PC-3 (cell line): ENCODE measurements at regions of chr17 and their contacts with region 1.

Region 1: GRCh38 chr17:49952209-49952911 is 16.6 kb upstream of the DLX4 start:
- DNase-seq: peak; percentile 90
- ATAC-seq: peak; percentile 88
- H3K4me3 ChIP-seq: peak overlapping the region; percentile 3; the same call in 1 of the 2 replicates
- H3K27ac ChIP-seq: peak overlapping the region; percentile 8; the same call in 1 of the 2 replicates
- H3K4me1 ChIP-seq: peaks cover 28% of the 10 kb centered on the region
- H3K27me3 ChIP-seq: no peaks in the 10 kb centered on the region
- CTCF ChIP-seq: peak; percentile 100

Region 2: GRCh38 chr17:49899191-49899485 is 53.2 kb before region 1 on chr17:
- CTCF ChIA-PET with region 1: interaction called, 5 read pairs
- POLR2A ChIA-PET with region 1: no interaction called
- intact Hi-C with region 1: loop called (anchors 5 kb)
- DNase-seq: peak; percentile 49
- ATAC-seq: peak; percentile 57
- H3K4me3 ChIP-seq: no peak overlapping the region
- H3K27ac ChIP-seq: no peak overlapping the region
- H3K4me1 ChIP-seq: peaks cover 5% of the 10 kb centered on the region
- H3K27me3 ChIP-seq: peaks cover 16% of the 10 kb centered on the region
- CTCF ChIP-seq: peak; percentile 64

Region 3: GRCh38 chr17:50015146-50015545 is 62.8 kb after region 1 on chr17:
- CTCF ChIA-PET with region 1: no interaction called
- POLR2A ChIA-PET with region 1: no interaction called
- intact Hi-C with region 1: no loop called
- DNase-seq: no peak
- ATAC-seq: no peak
- H3K4me3 ChIP-seq: no peak overlapping the region
- H3K27ac ChIP-seq: no peak overlapping the region
- H3K4me1 ChIP-seq: no peaks in the 10 kb centered on the region
- H3K27me3 ChIP-seq: no peaks in the 10 kb centered on the region
- CTCF ChIP-seq: no peak

Region 4: DNA sequence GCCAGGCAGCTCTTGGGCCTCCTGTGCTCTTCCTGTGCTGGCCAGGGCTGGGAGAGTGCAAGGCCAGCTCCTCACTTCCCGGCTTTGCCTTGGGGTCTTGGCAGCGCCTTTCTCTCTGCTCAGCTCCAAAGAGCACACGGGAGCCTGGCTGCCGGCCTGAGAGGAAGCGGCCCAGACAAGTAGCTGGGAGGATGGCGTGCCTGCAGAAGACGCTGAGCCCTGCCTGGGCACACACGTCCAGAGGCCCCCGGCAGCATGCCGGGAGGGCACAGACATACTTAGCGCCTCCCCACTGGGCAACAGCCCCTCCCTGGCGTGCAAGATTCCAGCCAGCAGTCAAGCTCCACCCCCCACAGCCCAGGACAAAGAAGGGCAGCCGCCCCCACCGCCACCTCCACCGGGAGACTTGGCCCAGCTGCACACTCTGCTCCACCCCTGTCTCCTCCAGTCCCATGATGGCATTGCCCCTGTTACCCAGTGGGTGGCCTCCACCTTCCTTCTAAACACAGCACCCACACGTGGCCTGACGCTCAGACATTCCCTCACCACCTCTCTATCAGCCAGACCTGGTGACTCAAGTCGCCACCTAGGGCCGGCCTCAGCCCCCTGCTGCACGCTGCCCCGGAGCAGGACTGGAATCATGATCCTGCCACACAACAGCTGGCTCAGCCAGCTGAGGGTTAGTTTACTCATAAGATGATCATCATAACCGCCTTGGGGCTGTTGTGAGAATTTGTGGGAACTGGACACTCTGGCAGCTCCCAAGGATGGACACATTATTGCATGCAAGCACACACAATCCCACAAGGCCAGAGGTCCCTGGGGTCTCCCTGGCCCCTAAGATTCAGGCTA is 225.8 kb after region 1 on chr17:
- CTCF ChIA-PET with region 1: no interaction called
- POLR2A ChIA-PET with region 1: no interaction called
- intact Hi-C with region 1: no loop called
- DNase-seq: peak; percentile 97
- ATAC-seq: peak; percentile 95
- H3K4me3 ChIP-seq: 0 out of 2 replicates have a peak overlapping the region, but pooled peaks have one; percentile 3
- H3K27ac ChIP-seq: peak overlapping the region; percentile 93
- H3K4me1 ChIP-seq: peaks cover 18% of the 10 kb centered on the region
- H3K27me3 ChIP-seq: no peaks in the 10 kb centered on the region
- CTCF ChIP-seq: peak; percentile 92